ENCODE measurements at regions of chr19 and their contacts with region 1.

Region 1: GRCh38 chr19:55117636-55118391 is at the start of gene PPP1R12C:
- DNase-seq: peak; percentile 99
- ATAC-seq: peak; percentile 96
- H3K4me3 Mint-ChIP-seq: peak within 1 kb of the TSS; percentile 95
- H3K27ac Mint-ChIP-seq: peak within 1 kb of the TSS; percentile 97
- H3K4me1 Mint-ChIP-seq: peaks cover 24% of the 10 kb centered on the region
- H3K27me3 Mint-ChIP-seq: peaks cover 2% of the 10 kb centered on the region
- total RNA-seq, gene PPP1R12C: 66.1 to 69.8 TPM

Region 2: GRCh38 chr19:54448774-54449700 is 668.8 kb before region 1 on chr19 and contains the start of gene LENG8:
- CTCF ChIA-PET with region 1: no interaction called
- POLR2A ChIA-PET with region 1: no interaction called
- intact Hi-C with region 1: loop called in 1 of 2 experiments (anchors 1 kb)
- DNase-seq: peak; percentile 98
- ATAC-seq: peak; percentile 92
- H3K4me3 Mint-ChIP-seq: peak within 1 kb of the TSS; percentile 98
- H3K27ac Mint-ChIP-seq: peak within 1 kb of the TSS; percentile 98
- H3K4me1 Mint-ChIP-seq: peaks cover 36% of the 10 kb centered on the region
- H3K27me3 Mint-ChIP-seq: no peaks in the 10 kb centered on the region
- total RNA-seq, gene LENG8: 156 to 221 TPM

Region 3: DNA sequence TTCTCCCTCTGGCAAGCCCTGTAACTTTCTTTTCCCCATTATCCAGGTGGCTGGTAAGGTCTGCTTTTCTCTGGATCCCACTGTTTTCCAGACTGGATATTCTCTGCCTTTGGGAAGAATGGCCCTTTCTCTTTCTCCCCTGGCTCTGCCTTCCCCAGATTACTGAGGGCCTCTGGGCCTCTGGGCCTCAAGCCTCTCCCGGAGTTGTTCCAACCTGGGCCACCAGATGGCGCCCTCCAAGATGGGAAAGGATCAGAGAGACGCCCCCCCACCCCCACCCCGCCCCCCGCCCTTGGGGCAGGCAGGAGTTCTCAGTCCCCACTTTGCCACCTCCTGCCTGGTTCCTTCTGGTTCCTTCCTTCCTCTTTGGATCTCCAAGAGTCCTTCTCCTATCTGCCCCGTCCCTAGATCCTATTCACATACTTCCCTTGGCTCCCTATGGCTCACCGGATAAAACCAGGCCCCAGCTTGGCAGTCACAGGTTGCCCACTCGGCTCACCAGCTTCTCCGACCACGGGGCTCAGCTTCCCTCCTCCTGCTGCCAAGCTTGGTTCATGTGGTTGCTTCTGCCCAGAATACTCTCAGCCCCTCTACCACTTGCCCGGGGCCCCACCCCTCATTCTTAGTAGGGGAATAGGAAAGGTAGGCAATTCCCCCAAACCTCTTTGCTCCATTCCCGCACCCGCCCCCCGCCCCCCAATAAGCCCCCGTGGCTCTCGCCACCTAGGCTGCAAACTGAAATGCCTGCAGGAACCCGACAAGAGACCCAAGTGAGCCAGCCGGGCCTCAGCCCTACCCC is 29.1 kb before region 1 on chr19:
- CTCF ChIA-PET with region 1: interaction called, 7 read pairs
- POLR2A ChIA-PET with region 1: no interaction called
- intact Hi-C with region 1: loop called in 1 of 2 experiments (anchors 1 kb)
- DNase-seq: peak; percentile 89
- ATAC-seq: peak; percentile 51
- H3K4me3 Mint-ChIP-seq: no peak overlapping the region
- H3K27ac Mint-ChIP-seq: no peak overlapping the region
- H3K4me1 Mint-ChIP-seq: peaks cover 16% of the 10 kb centered on the region
- H3K27me3 Mint-ChIP-seq: peaks cover 31% of the 10 kb centered on the region

Region 4: DNA sequence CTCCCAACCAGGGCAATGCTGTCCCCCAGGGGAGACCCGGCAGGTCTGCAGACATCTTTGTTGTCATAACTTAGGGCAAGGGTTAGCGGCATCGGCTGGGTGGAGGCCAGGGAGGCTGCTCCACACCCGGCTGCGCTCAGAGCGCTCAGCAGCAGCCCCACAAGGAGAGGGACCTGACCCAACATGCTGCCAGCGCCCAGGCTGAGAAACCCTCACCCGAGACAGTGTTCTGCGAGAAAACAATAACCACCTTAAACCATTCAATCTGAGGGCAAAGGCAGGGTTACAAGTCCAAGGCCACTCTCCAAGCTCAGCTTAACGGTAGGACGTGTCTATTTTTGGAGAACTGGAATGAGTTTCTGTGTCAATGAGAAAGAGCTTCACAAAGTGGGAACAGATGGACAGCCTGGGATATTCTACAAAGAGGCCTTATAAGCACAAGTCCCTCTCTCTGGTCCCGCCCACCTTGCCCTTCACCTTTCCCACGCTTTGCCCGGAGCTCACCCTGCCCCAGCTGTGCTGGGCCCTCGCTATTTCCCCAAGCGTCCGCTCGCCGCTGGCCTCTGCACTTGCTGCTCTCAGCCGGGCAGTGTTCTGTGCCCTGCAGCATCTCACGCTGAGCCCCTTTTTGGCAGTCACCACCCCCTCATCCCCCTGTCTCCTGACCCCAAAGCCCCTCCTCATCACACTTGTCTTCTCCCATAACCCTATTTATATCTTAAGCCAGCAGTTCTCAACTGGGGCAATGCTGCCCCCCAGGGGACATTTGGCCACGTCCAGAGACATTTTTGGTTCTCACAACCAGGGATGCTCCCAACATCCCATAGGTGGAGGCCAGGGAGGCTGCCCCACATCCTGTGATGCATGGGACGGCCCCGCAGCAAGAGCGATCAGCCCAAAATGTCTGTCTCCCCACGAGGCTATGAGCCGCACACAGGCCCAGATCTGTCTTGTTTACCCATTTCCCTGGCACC is 18.0 kb before region 1 on chr19:
- CTCF ChIA-PET with region 1: no interaction called
- POLR2A ChIA-PET with region 1: no interaction called
- intact Hi-C with region 1: no loop called
- DNase-seq: no peak
- ATAC-seq: no peak
- H3K4me3 Mint-ChIP-seq: no peak overlapping the region
- H3K27ac Mint-ChIP-seq: no peak overlapping the region
- H3K4me1 Mint-ChIP-seq: no peaks in the 10 kb centered on the region
- H3K27me3 Mint-ChIP-seq: no peaks in the 10 kb centered on the region

Region 5: DNA sequence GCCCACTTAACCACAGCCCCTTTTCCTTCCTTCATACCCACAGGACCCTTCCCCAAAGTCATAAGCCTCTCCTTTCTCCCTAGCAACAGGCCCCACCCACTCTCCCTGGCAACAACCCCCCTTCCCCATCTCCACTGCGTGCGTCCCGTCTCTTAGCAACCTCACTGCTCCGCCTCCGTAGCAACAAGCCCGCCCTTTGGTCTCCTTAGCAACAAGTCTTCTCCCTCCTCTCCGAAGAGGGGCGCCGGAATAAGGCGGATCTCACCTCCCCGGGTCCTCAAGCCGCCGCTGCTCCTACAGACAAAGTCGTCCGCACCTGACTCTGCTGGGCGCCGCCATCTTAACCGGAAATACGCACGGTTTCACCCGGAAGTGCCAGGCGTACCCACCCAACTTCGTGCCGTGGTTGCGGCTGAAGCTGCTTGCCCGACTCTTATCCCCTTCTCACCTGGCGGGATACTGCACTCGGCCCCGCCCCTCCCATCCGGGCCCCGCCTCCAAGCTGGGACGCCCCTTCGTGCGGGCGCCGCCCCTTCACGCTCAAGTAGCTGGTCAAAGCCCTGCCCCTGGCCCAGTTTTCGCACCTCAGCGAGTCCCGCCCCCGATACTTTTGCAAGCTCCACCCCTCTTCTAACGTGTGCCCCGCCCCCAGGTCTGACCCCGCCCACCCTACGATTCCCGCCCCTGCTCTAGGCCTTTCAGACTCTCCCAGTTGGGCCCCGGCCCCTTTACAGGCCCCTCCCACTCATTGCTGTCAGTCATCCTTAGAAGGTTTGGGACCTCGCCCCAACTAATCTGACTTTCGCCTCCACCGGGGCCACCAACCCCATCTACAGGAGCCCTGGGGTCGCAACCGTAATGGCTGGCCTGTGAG is 162.2 kb after region 1 on chr19 and contains the start of gene HSPBP1:
- CTCF ChIA-PET with region 1: no interaction called
- POLR2A ChIA-PET with region 1: no interaction called
- intact Hi-C with region 1: loop called in 1 of 2 experiments (anchors 1 kb)
- DNase-seq: peak; percentile 98
- ATAC-seq: peak; percentile 92
- H3K4me3 Mint-ChIP-seq: peak within 1 kb of the TSS; percentile 100
- H3K27ac Mint-ChIP-seq: peak within 1 kb of the TSS; percentile 98
- H3K4me1 Mint-ChIP-seq: peaks cover 24% of the 10 kb centered on the region
- H3K27me3 Mint-ChIP-seq: no peaks in the 10 kb centered on the region
- total RNA-seq, gene HSPBP1: 41.1 to 45.2 TPM

Region 6: DNA sequence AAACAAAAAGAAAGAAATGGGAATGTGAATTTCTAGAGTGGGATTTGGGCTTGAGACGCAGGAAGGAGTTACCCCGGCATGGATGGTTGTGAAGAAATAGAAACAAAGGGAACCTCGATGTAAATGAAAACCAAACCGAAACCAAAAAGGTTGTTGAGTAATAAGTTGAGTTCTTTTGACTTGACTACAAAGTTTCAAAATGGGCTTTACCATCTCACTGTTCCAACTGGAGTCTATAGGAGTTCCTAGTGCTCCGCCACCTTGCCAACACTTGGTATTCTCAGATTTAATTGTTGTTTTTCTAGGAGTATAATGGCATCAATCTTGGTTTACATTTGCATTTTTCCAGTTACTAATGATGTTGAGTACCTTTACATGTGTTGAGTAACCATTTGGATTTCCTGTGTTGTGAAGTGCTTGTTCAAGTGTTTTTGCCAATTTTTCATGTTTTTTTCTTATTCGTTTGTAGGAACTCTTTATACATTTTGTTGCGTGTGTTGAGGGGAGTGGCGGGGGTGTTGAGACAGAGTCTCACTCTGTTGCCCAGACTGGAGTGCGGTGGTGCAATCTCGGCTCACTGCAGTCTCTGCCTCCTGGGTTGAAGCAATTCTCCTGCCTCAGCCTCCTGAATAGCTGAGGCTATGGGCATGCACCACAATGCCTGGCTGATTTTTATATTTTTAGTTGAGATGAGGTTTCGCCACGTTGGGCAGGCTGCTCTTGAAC is 280.5 kb after region 1 on chr19:
- CTCF ChIA-PET with region 1: no interaction called
- POLR2A ChIA-PET with region 1: no interaction called
- intact Hi-C with region 1: no loop called
- DNase-seq: no peak
- ATAC-seq: peak; percentile 80
- H3K4me3 Mint-ChIP-seq: no peak overlapping the region
- H3K27ac Mint-ChIP-seq: peak overlapping the region; percentile 14
- H3K4me1 Mint-ChIP-seq: peaks cover 22% of the 10 kb centered on the region
- H3K27me3 Mint-ChIP-seq: no peaks in the 10 kb centered on the region

Region 7: GRCh38 chr19:55461259-55461973 is 343.6 kb after region 1 on chr19 and contains the start of gene ISOC2:
- CTCF ChIA-PET with region 1: no interaction called
- POLR2A ChIA-PET with region 1: no interaction called
- intact Hi-C with region 1: loop called in 1 of 2 experiments (anchors 1 kb)
- DNase-seq: peak; percentile 100
- ATAC-seq: peak; percentile 98
- H3K4me3 Mint-ChIP-seq: peak within 1 kb of the TSS; percentile 80
- H3K27ac Mint-ChIP-seq: peak within 1 kb of the TSS; percentile 82
- H3K4me1 Mint-ChIP-seq: peaks cover 14% of the 10 kb centered on the region
- H3K27me3 Mint-ChIP-seq: no peaks in the 10 kb centered on the region
- total RNA-seq, gene ISOC2: 24.3 to 28.0 TPM

Region 8: GRCh38 chr19:55653758-55654539 is 536.1 kb after region 1 on chr19:
- CTCF ChIA-PET with region 1: no interaction called
- POLR2A ChIA-PET with region 1: no interaction called
- intact Hi-C with region 1: loop called in 1 of 2 experiments (anchors 1 kb)
- DNase-seq: peak; percentile 99
- ATAC-seq: peak; percentile 84
- H3K4me3 Mint-ChIP-seq: peak overlapping the region; percentile 86
- H3K27ac Mint-ChIP-seq: peak overlapping the region; percentile 98
- H3K4me1 Mint-ChIP-seq: peaks cover 37% of the 10 kb centered on the region
- H3K27me3 Mint-ChIP-seq: no peaks in the 10 kb centered on the region

Measured in activated CD4-positive, alpha-beta T cell treated with anti-CD3 and anti-CD28 coated beads for 36 hours (primary cell).